ENCODE measurements at regions of chr16 and their contacts with region 1.

Region 1: DNA sequence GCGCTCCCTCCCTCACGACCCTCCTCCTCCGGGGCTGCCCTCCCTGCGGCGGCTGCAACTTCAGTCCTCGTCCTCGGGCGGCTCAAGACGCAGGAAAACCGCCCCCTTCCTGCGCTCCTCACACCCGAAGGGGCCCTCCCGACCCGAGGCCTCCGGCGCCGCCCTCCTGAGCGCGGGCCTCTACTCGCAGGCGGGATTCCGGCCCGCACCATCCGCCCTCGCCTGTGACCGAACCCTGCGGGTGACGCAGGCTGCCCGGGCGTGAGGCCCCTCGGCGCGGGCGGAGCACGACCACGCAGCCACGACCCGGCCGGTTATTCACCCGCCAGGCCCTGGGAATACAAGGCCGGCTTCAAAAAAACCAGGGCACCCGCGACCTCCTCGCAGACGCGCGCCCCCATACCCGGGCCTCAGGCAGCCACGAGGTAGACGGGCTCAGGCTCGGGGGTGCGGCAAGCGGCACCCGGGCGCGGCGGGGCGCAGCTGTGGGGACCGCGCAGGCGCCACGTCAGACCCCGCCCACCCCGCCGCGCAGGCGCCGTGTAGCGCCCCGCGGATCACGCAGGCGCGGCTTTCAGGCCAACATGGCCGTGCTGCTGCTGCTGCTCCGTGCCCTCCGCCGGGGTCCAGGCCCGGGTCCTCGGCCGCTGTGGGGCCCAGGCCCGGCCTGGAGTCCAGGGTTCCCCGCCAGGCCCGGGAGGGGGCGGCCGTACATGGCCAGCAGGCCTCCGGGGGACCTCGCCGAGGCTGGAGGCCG is at the start of gene SPG7:
- DNase-seq: peak; percentile 81
- H3K4me3 Mint-ChIP-seq: peak within 1 kb of the TSS; percentile 77
- H3K27ac Mint-ChIP-seq: peak within 1 kb of the TSS; percentile 59
- H3K4me1 Mint-ChIP-seq: peaks cover 15% of the 10 kb centered on the region
- H3K27me3 Mint-ChIP-seq: no peaks in the 10 kb centered on the region
- CTCF ChIP-seq: no peak
- total RNA-seq, gene SPG7: 82.4 and 92.3 TPM in 2 replicates

Region 2: GRCh38 chr16:89217388-89218191 is 290.4 kb before region 1 on chr16 and contains the start of gene ZNF778:
- CTCF ChIA-PET with region 1: no interaction called
- POLR2A ChIA-PET with region 1: interaction called, 10 read pairs
- intact Hi-C with region 1: no loop called
- DNase-seq: peak; percentile 78
- H3K4me3 Mint-ChIP-seq: peak within 1 kb of the TSS; percentile 88
- H3K27ac Mint-ChIP-seq: peak within 1 kb of the TSS; percentile 47
- H3K4me1 Mint-ChIP-seq: peaks cover 6% of the 10 kb centered on the region
- H3K27me3 Mint-ChIP-seq: no peaks in the 10 kb centered on the region
- CTCF ChIP-seq: no peak
- total RNA-seq, gene ZNF778: 13.5 and 15.8 TPM in 2 replicates

Region 3: DNA sequence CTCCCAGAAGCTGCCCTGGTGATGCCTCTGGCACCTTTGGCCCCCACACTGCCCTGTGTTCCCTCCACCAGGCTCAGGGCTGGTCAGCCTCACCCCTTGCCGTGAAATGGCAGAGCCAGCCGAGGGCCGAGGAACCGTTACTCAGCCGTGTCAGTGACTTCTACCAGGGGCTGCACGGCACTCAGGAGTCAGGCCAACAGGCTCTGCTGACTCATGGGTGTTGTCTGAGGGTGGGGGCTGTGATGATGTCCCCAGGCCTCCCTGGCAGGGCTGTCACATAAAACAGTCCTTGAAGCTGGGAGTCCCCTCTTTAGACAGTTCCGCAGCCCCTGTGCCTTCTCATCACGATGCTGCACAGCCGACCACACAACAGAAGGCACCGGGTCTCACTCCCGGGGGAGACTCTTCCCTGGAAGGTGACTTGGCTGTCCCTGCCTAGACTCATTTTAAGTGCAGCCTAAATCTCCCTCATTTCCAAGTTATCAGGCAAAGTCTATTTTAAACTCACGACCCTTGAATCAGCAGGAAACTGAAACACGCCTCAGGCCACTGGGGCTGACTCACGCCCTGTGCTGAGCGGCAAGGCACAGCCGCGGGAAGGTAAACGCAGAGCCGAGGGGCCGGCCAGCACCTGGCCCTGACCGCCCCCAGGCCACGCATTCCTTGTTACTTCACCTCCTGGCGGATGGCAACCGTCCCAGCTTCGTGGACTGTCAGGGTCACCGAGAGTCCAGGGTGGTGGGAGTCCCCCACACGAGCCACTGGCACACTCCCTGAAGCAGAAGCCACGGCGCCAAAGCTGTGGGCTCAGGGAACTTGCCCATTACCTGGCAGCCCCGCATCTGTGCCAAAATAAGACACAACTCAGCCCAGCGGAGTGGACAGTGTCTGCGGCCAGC is 187.9 kb before region 1 on chr16:
- CTCF ChIA-PET with region 1: interaction called, 4 read pairs
- POLR2A ChIA-PET with region 1: interaction called, 17 read pairs
- intact Hi-C with region 1: no loop called
- DNase-seq: peak; percentile 91
- H3K4me3 Mint-ChIP-seq: peak overlapping the region; percentile 62
- H3K27ac Mint-ChIP-seq: peak overlapping the region; percentile 85
- H3K4me1 Mint-ChIP-seq: peaks cover 73% of the 10 kb centered on the region
- H3K27me3 Mint-ChIP-seq: no peaks in the 10 kb centered on the region
- CTCF ChIP-seq: no peak

Region 4: GRCh38 chr16:89331371-89332109 is 176.5 kb before region 1 on chr16:
- CTCF ChIA-PET with region 1: interaction called, 4 read pairs
- POLR2A ChIA-PET with region 1: interaction called, 6 read pairs
- intact Hi-C with region 1: loop called (anchors 2 kb)
- DNase-seq: no peak
- H3K4me3 Mint-ChIP-seq: no peak overlapping the region
- H3K27ac Mint-ChIP-seq: peak overlapping the region; percentile 21
- H3K4me1 Mint-ChIP-seq: peaks cover 20% of the 10 kb centered on the region
- H3K27me3 Mint-ChIP-seq: no peaks in the 10 kb centered on the region
- CTCF ChIP-seq: no peak

Region 5: DNA sequence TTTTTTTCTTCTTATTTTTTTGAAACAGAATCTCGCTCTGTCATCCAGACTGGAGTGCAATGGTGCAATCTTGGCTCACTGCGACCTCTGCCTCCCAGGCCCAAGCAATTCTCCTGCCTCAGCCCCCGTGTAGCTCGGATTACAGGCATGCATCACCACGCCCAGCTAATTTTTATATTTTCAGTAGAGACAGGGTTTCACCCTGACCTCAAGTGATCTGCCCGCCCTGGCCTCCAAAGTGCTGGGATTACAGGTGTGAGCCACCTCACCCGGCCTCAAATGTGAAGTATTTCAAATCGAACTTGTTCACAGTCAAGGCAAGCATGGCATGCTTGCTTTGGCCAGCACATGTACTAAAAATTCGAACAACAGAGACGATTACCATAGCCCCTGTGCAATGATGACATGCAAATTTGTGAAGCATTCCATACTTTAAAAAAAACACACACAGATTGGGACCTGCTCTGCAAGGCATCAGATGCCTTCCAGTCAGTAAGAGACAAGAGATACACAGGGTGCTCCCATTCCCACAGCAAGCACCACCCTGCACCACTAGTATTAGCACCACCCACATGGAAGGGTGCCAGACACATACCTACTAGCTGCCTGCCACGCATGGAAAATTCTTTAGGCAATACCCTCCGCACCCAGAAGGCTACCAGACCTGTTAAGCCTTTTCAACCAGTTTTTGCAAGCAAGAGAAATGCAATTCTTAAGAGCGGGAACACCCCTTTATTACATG is 64.9 kb before region 1 on chr16:
- CTCF ChIA-PET with region 1: no interaction called
- POLR2A ChIA-PET with region 1: interaction called, 25 read pairs
- intact Hi-C with region 1: no loop called
- DNase-seq: peak; percentile 95
- H3K4me3 Mint-ChIP-seq: peak overlapping the region; percentile 68
- H3K27ac Mint-ChIP-seq: peak overlapping the region; percentile 95
- H3K4me1 Mint-ChIP-seq: peaks cover 49% of the 10 kb centered on the region
- H3K27me3 Mint-ChIP-seq: no peaks in the 10 kb centered on the region
- CTCF ChIP-seq: peak; percentile 12

Region 6: GRCh38 chr16:89490387-89491237 is 17.4 kb before region 1 on chr16 and contains the start of gene ANKRD11:
- CTCF ChIA-PET with region 1: interaction called, 3 read pairs
- POLR2A ChIA-PET with region 1: interaction called, 46 read pairs
- intact Hi-C with region 1: loop called (anchors 1 kb)
- DNase-seq: peak; percentile 99
- H3K4me3 Mint-ChIP-seq: peak within 1 kb of the TSS; percentile 88
- H3K27ac Mint-ChIP-seq: peak within 1 kb of the TSS; percentile 86
- H3K4me1 Mint-ChIP-seq: peaks cover 10% of the 10 kb centered on the region
- H3K27me3 Mint-ChIP-seq: no peaks in the 10 kb centered on the region
- CTCF ChIP-seq: no peak
- total RNA-seq, gene ANKRD11: 218 and 237 TPM in 2 replicates